PC-3 (cell line): ENCODE measurements at regions of chr17 and their contacts with region 1.

Region 1: GRCh38 chr17:39872751-39873150 is 4.7 kb downstream of the ZPBP2 start:
- DNase-seq: no peak
- ATAC-seq: no peak
- H3K4me3 ChIP-seq: no peak overlapping the region
- H3K27ac ChIP-seq: no peak overlapping the region
- H3K4me1 ChIP-seq: no peaks in the 10 kb centered on the region
- H3K27me3 ChIP-seq: peaks cover 12% of the 10 kb centered on the region
- CTCF ChIP-seq: no peak

Region 2: DNA sequence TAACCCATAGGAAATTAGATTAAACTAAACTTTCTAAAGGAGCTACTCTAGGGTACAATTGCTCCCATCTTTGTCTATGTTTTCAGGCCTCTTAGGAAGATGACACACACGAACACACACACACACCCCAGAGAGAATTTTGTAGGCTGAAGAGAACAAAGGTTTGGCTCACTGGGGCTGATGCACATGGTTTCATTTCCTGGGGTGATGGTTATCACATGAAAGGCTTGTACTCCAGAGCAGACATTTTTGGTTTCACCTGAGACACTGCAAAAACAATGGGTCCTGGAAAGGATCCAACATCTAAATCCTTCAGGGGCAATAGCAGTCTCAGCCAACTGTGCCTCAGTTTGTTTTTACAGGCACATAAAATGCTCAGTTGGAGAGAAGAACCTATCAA is 72.2 kb before region 1 on chr17:
- CTCF ChIA-PET with region 1: no interaction called
- POLR2A ChIA-PET with region 1: no interaction called
- intact Hi-C with region 1: loop called (anchors 10 kb)
- DNase-seq: no peak
- ATAC-seq: no peak
- H3K4me3 ChIP-seq: no peak overlapping the region
- H3K27ac ChIP-seq: no peak overlapping the region
- H3K4me1 ChIP-seq: no peaks in the 10 kb centered on the region
- H3K27me3 ChIP-seq: no peaks in the 10 kb centered on the region
- CTCF ChIP-seq: no peak

Region 3: GRCh38 chr17:39894681-39895376 is 22.1 kb after region 1 on chr17:
- CTCF ChIA-PET with region 1: no interaction called
- POLR2A ChIA-PET with region 1: interaction called, 10 read pairs
- intact Hi-C with region 1: no loop called
- DNase-seq: no peak
- ATAC-seq: no peak
- H3K4me3 ChIP-seq: no peak overlapping the region
- H3K27ac ChIP-seq: no peak overlapping the region
- H3K4me1 ChIP-seq: no peaks in the 10 kb centered on the region
- H3K27me3 ChIP-seq: no peaks in the 10 kb centered on the region; the same call in 1 of the 2 replicates
- CTCF ChIP-seq: no peak

Region 4: DNA sequence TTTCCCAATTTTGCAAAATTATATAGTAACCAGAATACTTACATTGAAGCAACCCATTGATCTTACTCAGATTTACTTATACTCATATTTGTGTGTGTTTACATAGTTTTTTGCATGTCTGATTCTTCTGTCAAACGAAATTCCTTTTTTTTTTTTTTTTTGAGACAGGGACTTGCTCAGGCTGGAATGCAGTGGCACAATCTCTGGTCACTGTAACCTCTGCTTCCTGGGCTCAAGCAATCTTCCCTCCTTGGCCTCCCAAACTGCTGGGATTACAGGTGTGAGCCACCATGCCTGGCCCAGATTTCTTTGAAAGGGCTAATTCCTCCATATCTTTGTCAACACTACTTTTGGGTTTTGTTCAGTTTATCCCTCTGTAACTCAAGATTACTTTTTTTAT is 514.9 kb after region 1 on chr17:
- CTCF ChIA-PET with region 1: no interaction called
- POLR2A ChIA-PET with region 1: no interaction called
- intact Hi-C with region 1: no loop called
- DNase-seq: no peak
- ATAC-seq: no peak
- H3K4me3 ChIP-seq: no peak overlapping the region
- H3K27ac ChIP-seq: no peak overlapping the region
- H3K4me1 ChIP-seq: no peaks in the 10 kb centered on the region
- H3K27me3 ChIP-seq: no peaks in the 10 kb centered on the region
- CTCF ChIP-seq: no peak

Region 5: DNA sequence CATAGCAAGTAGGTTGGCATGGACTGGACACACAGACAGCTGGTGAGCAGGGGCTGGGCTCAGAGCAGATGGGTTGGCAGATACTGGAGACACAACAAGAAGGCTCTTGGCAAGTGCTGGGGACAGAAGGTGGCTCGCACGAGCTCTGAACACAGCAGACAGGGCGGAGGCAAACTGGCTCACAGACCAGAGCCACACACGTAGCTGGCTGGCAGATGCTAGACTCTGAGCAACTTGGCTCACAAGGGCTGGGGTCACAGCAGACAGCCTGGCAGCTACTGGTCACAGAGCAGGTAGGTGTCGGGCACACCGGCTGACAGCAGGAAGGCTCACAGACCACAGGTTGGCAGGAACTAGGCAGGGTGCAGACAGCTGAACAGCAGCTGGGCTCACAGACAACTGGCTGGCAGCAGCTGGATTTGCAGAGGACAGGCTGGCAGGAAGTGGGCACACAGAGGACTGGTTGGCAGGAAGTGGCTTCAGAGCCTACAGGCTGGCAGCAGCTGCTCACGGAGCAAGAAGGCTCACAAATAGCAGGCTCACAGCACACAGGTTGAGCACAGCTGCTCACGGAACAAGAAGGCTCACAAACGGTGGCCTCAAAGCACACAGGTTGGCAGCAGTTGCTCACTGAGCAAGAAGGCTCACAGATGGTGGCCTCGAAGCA is 1435.6 kb after region 1 on chr17:
- CTCF ChIA-PET with region 1: no interaction called
- POLR2A ChIA-PET with region 1: no interaction called
- intact Hi-C with region 1: no loop called
- DNase-seq: no peak
- ATAC-seq: no peak
- H3K4me3 ChIP-seq: no peak overlapping the region
- H3K27ac ChIP-seq: no peak overlapping the region
- H3K4me1 ChIP-seq: no peaks in the 10 kb centered on the region
- H3K27me3 ChIP-seq: no peaks in the 10 kb centered on the region
- CTCF ChIP-seq: no peak